Ascending aorta (tissue), 2 donors: ENCODE measurements at regions of chr1 and their contacts with region 1.

Region 1: DNA sequence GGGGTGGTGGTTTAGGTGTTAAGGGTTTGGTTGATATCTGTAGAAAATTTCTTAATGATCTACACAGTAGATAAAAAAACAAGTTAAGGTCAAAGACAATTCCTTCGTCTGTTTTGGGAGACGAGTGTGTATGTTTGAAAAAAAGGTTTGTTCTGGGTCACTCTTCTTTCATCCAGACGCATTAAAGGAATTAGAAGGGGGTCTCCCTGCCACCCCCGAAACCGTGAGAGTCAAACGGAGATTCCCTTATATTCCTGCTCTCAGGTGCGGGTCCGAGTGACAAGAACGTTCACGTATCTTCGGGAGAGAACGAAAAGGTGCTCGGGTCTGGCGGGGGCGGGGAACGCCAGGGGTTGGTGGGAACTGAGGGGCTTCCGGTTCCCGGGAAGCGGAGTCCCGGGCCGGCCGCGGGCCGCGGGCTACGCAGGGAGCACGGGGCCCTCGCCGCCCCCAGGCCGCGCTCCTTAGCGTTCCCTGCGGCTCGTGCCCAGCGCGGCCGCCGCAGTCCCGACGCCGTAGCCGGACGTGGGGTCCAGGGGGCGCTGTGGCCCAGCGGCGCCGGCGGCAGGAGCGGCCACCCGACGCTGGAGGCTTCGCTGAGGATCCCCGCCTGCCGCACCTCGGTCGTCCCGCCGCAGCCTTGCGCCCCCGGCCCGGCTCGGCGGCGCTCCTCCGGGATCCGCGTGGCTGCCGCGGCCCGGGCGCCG is at the start of gene ZFYVE9:
- DNase-seq: peak in 1 of 2 donors; percentile 83
- H3K4me3 ChIP-seq: peak within 1 kb of the TSS; percentile 95 to 98
- H3K27ac ChIP-seq: peak within 1 kb of the TSS; percentile 96 to 98
- H3K4me1 ChIP-seq: peaks cover 0 to 30% of the 10 kb centered on the region in 2 donors
- H3K27me3 ChIP-seq: no peaks in the 10 kb centered on the region
- CTCF ChIP-seq: peak; percentile 46 to 93 (median 52)
- total RNA-seq, gene ZFYVE9: 8.1 TPM

Region 2: GRCh38 chr1:50959913-50960844 is 1181.5 kb before region 1 on chr1 and contains the start of gene FAF1:
- intact Hi-C with region 1: loop called (anchors 10 kb)
- DNase-seq: peak; percentile 83 to 98
- H3K4me3 ChIP-seq: peak within 1 kb of the TSS; percentile 92 to 94
- H3K27ac ChIP-seq: peak within 1 kb of the TSS; percentile 77 to 79
- H3K4me1 ChIP-seq: peaks cover 0 to 11% of the 10 kb centered on the region in 2 donors
- H3K27me3 ChIP-seq: no peaks in the 10 kb centered on the region
- CTCF ChIP-seq: peak in 1 of 3 experiments; percentile 25
- total RNA-seq, gene FAF1: 16.4 TPM

Region 3: DNA sequence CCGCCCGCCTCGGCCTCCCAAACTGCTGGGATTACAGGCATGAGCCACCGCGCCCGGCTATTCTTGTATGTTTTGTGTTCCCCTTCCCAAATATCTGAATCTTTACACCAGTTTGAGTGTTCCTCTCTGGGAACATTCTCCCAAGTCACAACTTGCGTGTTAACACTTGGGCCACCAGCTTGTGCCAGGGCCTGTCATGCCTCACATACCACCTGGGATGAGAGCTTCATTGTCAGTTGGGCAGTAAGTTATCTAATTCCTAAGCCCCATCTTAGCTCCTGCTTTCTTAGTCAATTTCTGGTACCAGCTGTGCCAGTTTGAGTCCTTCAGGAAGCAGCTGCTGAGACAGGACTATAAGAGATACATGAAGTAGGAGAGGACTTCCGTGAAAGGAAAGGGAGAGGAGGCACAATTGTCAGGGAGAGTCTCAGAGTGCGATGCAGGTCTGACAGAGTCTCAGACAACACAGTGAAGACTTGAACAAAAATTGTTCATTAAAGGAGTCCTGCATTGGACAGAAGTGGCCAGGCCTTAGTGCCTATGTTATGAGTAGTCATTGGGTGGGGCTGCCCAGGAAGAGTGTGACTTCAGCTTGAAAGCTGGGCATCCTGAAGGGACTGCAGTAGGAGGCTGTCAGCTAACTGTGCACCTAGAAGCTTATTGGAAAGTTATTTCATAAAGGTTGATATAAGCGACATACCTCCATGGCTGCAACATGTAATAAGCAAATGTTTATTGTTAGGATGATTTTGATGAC is 17.5 kb after region 1 on chr1:
- intact Hi-C with region 1: no loop called
- DNase-seq: no peak
- H3K4me3 ChIP-seq: no peak overlapping the region
- H3K27ac ChIP-seq: no peak overlapping the region
- H3K4me1 ChIP-seq: no peaks in the 10 kb centered on the region
- H3K27me3 ChIP-seq: no peaks in the 10 kb centered on the region
- CTCF ChIP-seq: no peak

Region 4: DNA sequence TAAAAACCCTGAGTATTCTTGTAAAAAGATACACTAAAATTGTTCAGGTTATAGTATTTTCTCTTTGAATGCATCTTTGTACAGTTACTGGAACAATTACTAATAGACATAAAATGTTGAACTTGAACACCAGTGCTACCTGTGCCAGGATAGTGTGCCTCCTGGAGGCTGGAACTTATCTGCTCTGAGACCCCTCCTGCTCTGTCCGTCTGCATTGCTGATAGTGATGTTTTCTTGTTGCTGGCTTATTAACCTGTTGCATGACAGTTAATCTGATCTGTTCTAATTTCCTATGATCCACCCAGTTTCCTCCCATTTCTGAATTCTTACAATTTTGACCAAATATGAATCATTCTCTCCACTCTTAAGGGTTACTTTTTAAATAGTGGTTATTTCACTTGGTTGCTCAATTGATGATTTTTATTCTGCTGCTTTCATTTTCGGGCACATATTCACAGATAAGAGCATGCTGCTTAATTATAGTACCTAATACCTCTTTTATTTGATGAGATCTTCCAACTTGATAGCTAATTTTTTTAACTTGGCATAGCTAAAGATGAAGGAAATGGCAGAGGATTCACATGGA is 123.0 kb after region 1 on chr1:
- intact Hi-C with region 1: loop called (anchors 5 kb)
- DNase-seq: no peak
- H3K4me3 ChIP-seq: no peak overlapping the region
- H3K27ac ChIP-seq: no peak overlapping the region
- H3K4me1 ChIP-seq: no peaks in the 10 kb centered on the region
- H3K27me3 ChIP-seq: no peaks in the 10 kb centered on the region
- CTCF ChIP-seq: no peak

Region 5: GRCh38 chr1:52365746-52366516 is 224.3 kb after region 1 on chr1 and contains the start of gene CC2D1B:
- intact Hi-C with region 1: loop called (anchors 1 kb)
- DNase-seq: peak; percentile 96 to 99
- H3K4me3 ChIP-seq: peak within 1 kb of the TSS; percentile 90 to 94
- H3K27ac ChIP-seq: peak within 1 kb of the TSS; percentile 92 to 96
- H3K4me1 ChIP-seq: peaks cover 2 to 14% of the 10 kb centered on the region in 2 donors
- H3K27me3 ChIP-seq: no peaks in the 10 kb centered on the region
- CTCF ChIP-seq: peak in 1 of 3 experiments; percentile 34
- total RNA-seq, gene CC2D1B: 45.4 TPM

Region 6: DNA sequence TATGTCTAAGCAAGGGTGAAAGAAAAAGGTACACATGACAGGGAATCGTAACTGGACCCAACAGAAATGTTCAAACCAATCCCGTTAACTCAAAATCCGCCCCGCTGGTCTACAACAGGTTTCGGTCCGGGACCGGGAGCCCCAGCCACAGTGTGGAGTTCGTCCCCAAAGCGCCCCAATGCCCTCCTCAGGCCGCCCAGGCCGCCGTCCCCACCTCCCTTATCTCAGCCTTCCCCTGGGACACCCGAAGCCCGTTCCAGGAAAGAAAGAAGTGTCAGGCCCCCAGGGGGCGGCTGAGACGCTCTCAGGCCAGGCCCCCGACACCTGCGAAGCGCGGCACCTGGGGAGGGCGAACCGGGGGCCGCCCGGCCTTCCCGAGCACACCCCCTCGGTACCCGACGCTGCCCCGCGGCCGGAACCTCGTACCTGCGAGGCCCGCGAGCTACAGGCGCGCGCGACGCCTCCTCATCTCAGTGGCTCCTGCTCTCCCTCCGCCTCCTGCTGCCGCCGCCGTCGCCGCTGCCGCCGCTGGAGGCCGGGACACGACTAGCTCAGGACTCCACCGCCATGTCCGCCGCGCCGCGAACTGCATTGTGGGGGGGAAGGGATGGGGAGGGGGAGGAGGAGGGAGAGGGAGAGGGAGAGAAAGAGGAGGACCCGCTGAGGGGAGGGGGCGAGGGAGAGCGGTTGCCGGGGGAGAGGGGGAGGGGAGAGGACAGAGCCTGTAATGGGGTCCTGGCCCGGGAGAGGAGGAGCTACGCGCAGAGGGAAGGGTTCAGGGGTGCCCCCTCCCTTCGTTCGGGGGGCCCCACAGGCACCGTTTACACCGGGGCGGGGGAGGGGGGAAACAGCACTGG is 411.1 kb after region 1 on chr1 and contains the start of gene TUT4:
- intact Hi-C with region 1: loop called (anchors 5 kb)
- DNase-seq: peak; percentile 12 to 84
- H3K4me3 ChIP-seq: peak within 1 kb of the TSS; percentile 94 to 98
- H3K27ac ChIP-seq: peak within 1 kb of the TSS; percentile 86 to 92
- H3K4me1 ChIP-seq: peaks cover 4 to 5% of the 10 kb centered on the region in 2 donors
- H3K27me3 ChIP-seq: no peaks in the 10 kb centered on the region
- CTCF ChIP-seq: no peak
- total RNA-seq, gene TUT4: 36.2 TPM